H1 (cell line): ENCODE measurements at regions of chr11 and their contacts with region 1.

Region 1: DNA sequence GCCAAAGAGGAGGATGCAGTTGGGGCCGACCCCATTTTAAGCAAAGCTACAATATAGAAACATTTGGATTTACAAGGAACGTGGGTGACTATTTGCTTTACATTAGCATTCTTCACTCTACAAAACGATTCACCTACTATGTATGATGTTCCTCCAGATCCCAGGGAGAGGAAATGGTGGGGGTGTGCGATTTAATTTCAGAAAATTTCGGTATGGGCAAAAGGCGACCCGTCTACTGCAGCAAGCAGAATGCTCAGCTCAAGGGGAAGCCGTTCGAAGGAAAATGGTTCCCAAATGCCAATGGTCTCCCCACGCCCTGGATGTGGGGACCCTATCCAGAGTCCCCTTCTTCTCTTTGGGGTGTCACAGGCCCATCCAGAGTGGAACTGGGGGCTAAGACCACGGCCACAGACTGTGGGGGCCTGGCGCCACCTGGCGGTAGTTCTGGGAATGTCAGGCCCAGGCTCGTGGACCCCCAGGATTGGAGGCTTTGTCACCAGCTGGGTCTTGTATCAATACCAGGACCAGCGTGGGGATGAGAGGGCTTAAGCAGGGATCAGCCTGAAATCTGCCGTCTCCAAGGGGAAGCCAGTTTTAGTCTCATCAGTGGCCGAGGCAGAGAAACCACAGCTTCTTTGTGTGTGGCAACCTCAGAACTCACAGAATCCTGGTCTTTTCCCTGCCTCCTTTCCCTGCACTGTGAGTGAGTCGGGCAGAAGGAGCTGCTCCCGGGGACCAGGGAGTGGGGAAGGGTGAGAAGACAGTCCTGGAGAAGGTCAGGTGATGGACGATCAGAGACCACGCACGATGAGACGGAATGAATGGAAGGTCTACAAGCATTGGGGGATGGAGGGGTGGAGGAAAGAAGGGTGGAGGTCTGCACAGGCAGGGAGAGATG is 8.4 kb downstream of the LRRC10B start:
- DNase-seq: peak in 1 of 2 experiments; percentile 96
- H3K4me3 ChIP-seq: peak overlapping the region in 1 of 4 experiments; percentile 39; a peak in 1 of 8 replicates
- H3K27ac ChIP-seq: no peak overlapping the region
- H3K4me1 ChIP-seq: peaks cover 0 to 41% (median 27%) of the 10 kb centered on the region in 4 experiments; a peak in 6 of 7 replicates
- H3K27me3 ChIP-seq: no peaks in the 10 kb centered on the region; a peak in 2 of 7 replicates
- CTCF ChIP-seq: peak in 2 of 3 experiments; percentile 98; a peak in 3 of 4 replicates
- EP300 ChIP-seq: no peak
- POLR2A ChIP-seq: no peak
- RAD21 ChIP-seq: peak; percentile 98 to 99

Region 2: DNA sequence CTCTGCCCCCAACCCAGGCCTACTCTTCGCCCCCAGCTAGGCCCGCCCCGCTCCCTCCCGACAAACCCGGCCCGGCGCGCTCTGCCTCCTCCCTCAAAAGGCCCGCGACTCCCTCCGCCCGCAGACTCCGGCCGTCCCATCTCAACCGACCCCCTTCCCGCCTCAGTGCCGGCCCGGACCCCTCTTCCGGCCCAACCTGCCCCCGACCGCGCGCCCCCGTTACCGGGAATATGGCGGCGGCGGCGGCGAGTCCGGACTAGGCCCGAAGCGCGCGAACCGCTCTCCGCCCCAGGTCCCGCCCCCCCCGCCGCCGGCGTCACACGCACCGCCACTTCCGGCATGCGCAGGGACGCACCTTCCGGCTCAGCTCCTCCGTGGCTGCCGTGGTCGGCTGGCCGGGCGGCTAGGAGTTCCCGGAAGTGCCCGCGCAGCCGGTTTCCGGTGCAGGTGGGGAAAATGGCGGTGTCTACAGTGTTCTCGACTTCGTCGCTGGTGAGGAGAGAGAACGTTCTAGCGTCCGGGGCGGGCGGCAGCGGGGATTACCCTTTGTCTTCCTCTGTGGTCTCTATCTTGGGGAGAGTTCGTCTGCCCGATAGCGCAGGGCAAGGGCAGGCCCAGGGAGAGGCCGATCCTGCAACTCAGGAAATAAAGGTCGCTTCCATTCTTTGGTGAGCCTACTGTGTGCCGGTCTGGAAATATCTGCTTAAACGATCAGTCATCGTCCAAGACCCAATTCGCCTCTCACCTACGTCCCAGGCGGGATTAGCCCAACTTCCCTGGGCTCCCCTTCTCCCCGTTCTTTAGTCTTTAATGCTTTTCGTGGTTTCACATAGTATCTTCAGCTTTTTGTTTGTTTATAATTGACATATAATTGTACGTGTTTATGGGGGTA is 87.0 kb before region 1 on chr11 and contains the starts of genes CPSF7 and SDHAF2:
- CTCF ChIA-PET with region 1: interaction called, 13 read pairs
- POLR2A ChIA-PET with region 1: interaction called, 4 read pairs
- DNase-seq: peak; percentile 82 to 98
- H3K4me3 ChIP-seq: peak within 1 kb of the TSS; percentile 76 to 94 (median 89)
- H3K27ac ChIP-seq: peak within 1 kb of the TSS; percentile 97
- H3K4me1 ChIP-seq: no peaks in the 10 kb centered on the region; a peak in 1 of 7 replicates
- H3K27me3 ChIP-seq: no peaks in the 10 kb centered on the region
- CTCF ChIP-seq: no peak
- EP300 ChIP-seq: 0 out of 3 replicates have a peak, but pooled peaks of 1 of the 2 experiments have one; percentile 24
- POLR2A ChIP-seq: peak; percentile 78 to 91
- RAD21 ChIP-seq: no peak
- total RNA-seq, gene CPSF7: 95.9 and 96.7 TPM in 2 replicates
- total RNA-seq, gene SDHAF2: 41.0 and 44.8 TPM in 2 replicates

Region 3: GRCh38 chr11:61532139-61533038 is 15.5 kb after region 1 on chr11:
- CTCF ChIA-PET with region 1: interaction called, 224 read pairs
- POLR2A ChIA-PET with region 1: interaction called, 5 read pairs
- DNase-seq: peak in 1 of 2 experiments; percentile 90
- H3K4me3 ChIP-seq: no peak overlapping the region
- H3K27ac ChIP-seq: no peak overlapping the region
- H3K4me1 ChIP-seq: peaks cover 0 to 11% (median 4%) of the 10 kb centered on the region in 4 experiments; a peak in 5 of 7 replicates
- H3K27me3 ChIP-seq: no peaks in the 10 kb centered on the region
- CTCF ChIP-seq: peak in 2 of 3 experiments; percentile 89 to 94; a peak in 3 of 4 replicates
- EP300 ChIP-seq: no peak
- POLR2A ChIP-seq: no peak
- RAD21 ChIP-seq: peak; percentile 69 to 81

Region 4: GRCh38 chr11:61549662-61550568 is 33.0 kb after region 1 on chr11:
- CTCF ChIA-PET with region 1: interaction called, 109 read pairs
- POLR2A ChIA-PET with region 1: no interaction called
- DNase-seq: no peak
- H3K4me3 ChIP-seq: no peak overlapping the region
- H3K27ac ChIP-seq: no peak overlapping the region
- H3K4me1 ChIP-seq: peaks cover 0 to 25% (median 8%) of the 10 kb centered on the region in 4 experiments; a peak in 5 of 7 replicates
- H3K27me3 ChIP-seq: peaks cover 0 to 8% (median 8%) of the 10 kb centered on the region in 4 experiments; a peak in 5 of 7 replicates
- CTCF ChIP-seq: no peak
- EP300 ChIP-seq: no peak
- POLR2A ChIP-seq: no peak
- RAD21 ChIP-seq: no peak

Region 5: GRCh38 chr11:61581030-61581928 is 64.4 kb after region 1 on chr11 and contains the start of gene SYT7:
- CTCF ChIA-PET with region 1: interaction called, 30 read pairs
- POLR2A ChIA-PET with region 1: interaction called, 3 read pairs
- DNase-seq: peak; percentile 89 to 100
- H3K4me3 ChIP-seq: peak within 1 kb of the TSS; percentile 46 to 85 (median 64)
- H3K27ac ChIP-seq: no peak within 1 kb of the TSS
- H3K4me1 ChIP-seq: peaks cover 4 to 41% (median 31%) of the 10 kb centered on the region in 4 experiments
- H3K27me3 ChIP-seq: peaks cover 2 to 32% (median 26%) of the 10 kb centered on the region in 4 experiments
- CTCF ChIP-seq: peak in 1 of 3 experiments; percentile 9; a peak in 1 of 4 replicates
- EP300 ChIP-seq: peak in 1 of 2 experiments; percentile 67; a peak in 1 of 3 replicates
- POLR2A ChIP-seq: no peak
- RAD21 ChIP-seq: peak; percentile 1 to 9; a peak in 1 of 4 replicates
- total RNA-seq, gene SYT7: 10.5 and 10.6 TPM in 2 replicates